CD8-positive, alpha-beta memory T cell (primary cell): ENCODE measurements at regions of chr1 and their contacts with region 1.

Region 1: GRCh38 chr1:42958488-42959319 is at the start of gene SLC2A1:
- DNase-seq: peak; percentile 92 to 99 (median 94)
- H3K4me3 ChIP-seq: peak within 1 kb of the TSS; percentile 78
- H3K4me3 Mint-ChIP-seq: peak within 1 kb of the TSS; percentile 95 to 100 (median 98)
- H3K27ac ChIP-seq: peak within 1 kb of the TSS; percentile 84
- H3K27ac Mint-ChIP-seq: peak within 1 kb of the TSS; percentile 96 to 99 (median 98)
- H3K4me1 ChIP-seq: peaks cover 43% of the 10 kb centered on the region
- H3K4me1 Mint-ChIP-seq: peaks cover 52 to 59% (median 56%) of the 10 kb centered on the region in 3 donors
- H3K27me3 ChIP-seq: no peaks in the 10 kb centered on the region
- H3K27me3 Mint-ChIP-seq: peaks cover 0 to 2% of the 10 kb centered on the region in 2 donors
- total RNA-seq, gene SLC2A1: 103 to 108 TPM

Region 2: DNA sequence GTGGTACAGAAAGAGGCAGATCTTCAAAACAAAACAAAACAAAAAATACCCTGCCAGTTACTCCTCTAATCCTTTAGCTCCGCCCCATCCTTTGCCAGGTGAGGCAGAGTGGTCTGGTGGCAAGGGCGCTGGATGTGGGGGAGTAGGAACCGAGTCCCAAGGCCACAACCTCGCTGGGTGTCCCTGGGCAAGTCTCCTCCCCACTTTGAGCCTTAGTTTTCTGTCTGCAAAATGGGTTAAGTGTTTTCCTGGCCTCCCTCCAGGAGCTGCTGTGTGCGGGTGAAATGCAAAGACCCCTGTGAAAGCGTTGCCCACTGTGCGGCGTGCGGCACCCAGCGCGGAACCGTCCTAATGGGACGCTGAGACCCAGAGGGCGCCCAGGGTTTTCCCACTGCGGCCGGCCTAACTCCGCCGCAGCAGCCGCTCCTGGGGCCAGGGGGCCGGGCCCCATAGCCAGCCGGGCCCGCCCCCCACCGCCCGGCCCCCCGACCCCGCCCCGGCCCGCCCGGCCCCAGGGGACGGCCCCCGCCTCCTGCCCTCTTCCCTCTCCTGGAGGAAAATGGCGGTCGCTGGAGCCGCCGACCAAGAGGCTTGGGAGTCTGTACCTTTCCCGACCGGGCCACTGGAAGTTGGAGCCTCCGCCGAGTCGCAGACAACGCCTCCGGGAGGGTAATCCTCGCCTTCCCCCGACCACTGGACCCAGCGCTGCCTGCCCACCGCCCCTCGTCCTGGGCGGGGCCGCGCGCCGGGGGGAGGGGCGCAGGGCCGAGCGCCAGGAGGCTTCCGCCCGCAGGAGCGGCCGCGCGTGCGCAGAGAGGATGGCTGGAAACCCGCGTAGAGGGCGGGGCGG is 141.9 kb before region 1 on chr1 and contains the starts of genes ERMAP and SVBP:
- CTCF ChIA-PET with region 1: no interaction called
- POLR2A ChIA-PET with region 1: no interaction called
- DNase-seq: peak; percentile 91 to 95 (median 92)
- H3K4me3 ChIP-seq: peak within 1 kb of the TSS; percentile 60
- H3K4me3 Mint-ChIP-seq: peak within 1 kb of the TSS; percentile 78 to 91 (median 85)
- H3K27ac ChIP-seq: peak within 1 kb of the TSS; percentile 76
- H3K27ac Mint-ChIP-seq: peak within 1 kb of the TSS; percentile 84 to 98 (median 94)
- H3K4me1 ChIP-seq: peaks cover 10% of the 10 kb centered on the region
- H3K4me1 Mint-ChIP-seq: peaks cover 18 to 29% (median 23%) of the 10 kb centered on the region in 3 donors
- H3K27me3 ChIP-seq: no peaks in the 10 kb centered on the region
- H3K27me3 Mint-ChIP-seq: no peaks in the 10 kb centered on the region
- total RNA-seq, gene ERMAP: 3.5 to 3.6 TPM
- total RNA-seq, gene SVBP: 12.6 to 16.4 TPM

Region 3: DNA sequence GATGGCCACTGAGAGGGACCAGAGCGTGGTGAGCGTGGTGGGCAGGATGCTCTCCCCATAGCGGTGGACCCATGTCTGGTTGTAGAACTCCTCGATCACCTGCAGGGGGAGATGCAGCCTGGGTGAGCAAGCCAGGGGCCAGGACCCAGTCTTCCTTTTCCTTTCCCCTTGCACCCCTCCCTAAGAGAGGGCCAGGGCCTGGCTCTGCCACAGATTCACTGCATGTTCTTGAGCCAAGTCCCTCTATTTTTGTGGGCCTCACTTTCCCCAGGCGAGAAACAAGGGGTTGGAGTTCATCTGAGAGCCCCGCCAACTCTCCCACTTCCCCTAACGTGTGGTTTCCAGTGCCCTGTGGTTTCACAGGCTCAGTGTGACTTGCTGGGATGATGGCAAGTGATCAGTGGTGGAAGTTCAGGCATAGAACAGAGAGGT is 27.6 kb before region 1 on chr1:
- CTCF ChIA-PET with region 1: interaction called, 8 read pairs
- POLR2A ChIA-PET with region 1: interaction called, 12 read pairs
- DNase-seq: peak; percentile 41 to 77 (median 72)
- H3K4me3 ChIP-seq: peak overlapping the region; percentile 30
- H3K4me3 Mint-ChIP-seq: peak overlapping the region; percentile 63 to 88 (median 81)
- H3K27ac ChIP-seq: peak overlapping the region; percentile 77
- H3K27ac Mint-ChIP-seq: peak overlapping the region; percentile 89 to 99 (median 96)
- H3K4me1 ChIP-seq: peaks cover 66% of the 10 kb centered on the region
- H3K4me1 Mint-ChIP-seq: peaks cover 68 to 74% (median 74%) of the 10 kb centered on the region in 3 donors
- H3K27me3 ChIP-seq: no peaks in the 10 kb centered on the region
- H3K27me3 Mint-ChIP-seq: peaks cover 0 to 3% of the 10 kb centered on the region in 2 donors

Region 4: GRCh38 chr1:42999308-42999707 is 40.6 kb after region 1 on chr1:
- CTCF ChIA-PET with region 1: no interaction called
- POLR2A ChIA-PET with region 1: no interaction called
- DNase-seq: no peak
- H3K4me3 ChIP-seq: no peak overlapping the region
- H3K4me3 Mint-ChIP-seq: no peak overlapping the region
- H3K27ac ChIP-seq: no peak overlapping the region
- H3K27ac Mint-ChIP-seq: no peak overlapping the region
- H3K4me1 ChIP-seq: no peaks in the 10 kb centered on the region
- H3K4me1 Mint-ChIP-seq: no peaks in the 10 kb centered on the region
- H3K27me3 ChIP-seq: no peaks in the 10 kb centered on the region
- H3K27me3 Mint-ChIP-seq: peaks cover 0 to 1% of the 10 kb centered on the region in 2 donors